Activated CD4-positive, alpha-beta memory T cell treated with anti-CD3 and anti-CD28 coated beads for 36 hours (primary cell): ENCODE measurements at regions of chr4 and their contacts with region 1.

Region 1: DNA sequence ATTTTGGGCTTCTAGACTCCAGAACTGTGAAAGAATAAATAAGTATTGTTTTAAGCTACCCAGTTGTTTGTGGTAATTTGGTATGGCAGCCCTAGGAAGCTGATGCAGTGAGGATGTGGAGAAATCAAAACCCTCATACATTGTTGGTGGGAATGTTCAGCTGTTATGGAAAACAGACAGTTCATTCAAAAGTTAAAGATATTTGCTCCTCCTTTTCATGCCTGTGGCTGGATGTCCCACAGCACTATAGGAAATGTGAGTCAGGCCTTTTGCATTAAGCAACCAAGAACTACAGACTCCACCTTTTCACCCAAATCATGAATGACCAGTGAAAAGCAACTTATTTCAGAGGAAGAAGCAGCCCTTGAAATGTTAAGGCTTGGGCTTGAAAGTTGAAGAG is 6.7 kb downstream of the BBS12 start:
- DNase-seq: no peak
- H3K4me3 Mint-ChIP-seq: no peak overlapping the region
- H3K27ac Mint-ChIP-seq: no peak overlapping the region
- H3K4me1 Mint-ChIP-seq: peaks cover 11% of the 10 kb centered on the region
- H3K27me3 Mint-ChIP-seq: no peaks in the 10 kb centered on the region

Region 2: GRCh38 chr4:122710434-122711308 is 28.5 kb before region 1 on chr4:
- CTCF ChIA-PET with region 1: no interaction called
- POLR2A ChIA-PET with region 1: no interaction called
- intact Hi-C with region 1: no loop called
- DNase-seq: peak; percentile 73
- H3K4me3 Mint-ChIP-seq: peak overlapping the region; percentile 60
- H3K27ac Mint-ChIP-seq: peak overlapping the region; percentile 94
- H3K4me1 Mint-ChIP-seq: peaks cover 72% of the 10 kb centered on the region
- H3K27me3 Mint-ChIP-seq: no peaks in the 10 kb centered on the region

Region 3: GRCh38 chr4:122914292-122914904 is 175.2 kb after region 1 on chr4:
- CTCF ChIA-PET with region 1: no interaction called
- POLR2A ChIA-PET with region 1: no interaction called
- intact Hi-C with region 1: loop called (anchors 5 kb)
- DNase-seq: no peak
- H3K4me3 Mint-ChIP-seq: no peak overlapping the region
- H3K27ac Mint-ChIP-seq: no peak overlapping the region
- H3K4me1 Mint-ChIP-seq: peaks cover 3% of the 10 kb centered on the region
- H3K27me3 Mint-ChIP-seq: no peaks in the 10 kb centered on the region